ENCODE measurements at regions of chr5 and their contacts with region 1.

Region 1: GRCh38 chr5:10856683-10857337 is 95.8 kb upstream of the DAP start:
- DNase-seq: peak; percentile 70 to 92
- H3K4me3 ChIP-seq: peak overlapping the region in 3 of 4 experiments; percentile 2 to 48 (median 20); a peak in 4 of 8 replicates
- H3K27ac ChIP-seq: no peak overlapping the region
- H3K4me1 ChIP-seq: peaks cover 4 to 16% (median 14%) of the 10 kb centered on the region in 4 experiments
- H3K27me3 ChIP-seq: peaks cover 0 to 10% (median 6%) of the 10 kb centered on the region in 4 experiments; a peak in 3 of 7 replicates
- CTCF ChIP-seq: peak; percentile 76 to 91 (median 86)
- EP300 ChIP-seq: 0 out of 3 replicates have a peak, but pooled peaks of 1 of the 2 experiments have one; percentile 55
- POLR2A ChIP-seq: no peak
- RAD21 ChIP-seq: peak; percentile 50 to 60; a peak in 3 of 4 replicates

Region 2: DNA sequence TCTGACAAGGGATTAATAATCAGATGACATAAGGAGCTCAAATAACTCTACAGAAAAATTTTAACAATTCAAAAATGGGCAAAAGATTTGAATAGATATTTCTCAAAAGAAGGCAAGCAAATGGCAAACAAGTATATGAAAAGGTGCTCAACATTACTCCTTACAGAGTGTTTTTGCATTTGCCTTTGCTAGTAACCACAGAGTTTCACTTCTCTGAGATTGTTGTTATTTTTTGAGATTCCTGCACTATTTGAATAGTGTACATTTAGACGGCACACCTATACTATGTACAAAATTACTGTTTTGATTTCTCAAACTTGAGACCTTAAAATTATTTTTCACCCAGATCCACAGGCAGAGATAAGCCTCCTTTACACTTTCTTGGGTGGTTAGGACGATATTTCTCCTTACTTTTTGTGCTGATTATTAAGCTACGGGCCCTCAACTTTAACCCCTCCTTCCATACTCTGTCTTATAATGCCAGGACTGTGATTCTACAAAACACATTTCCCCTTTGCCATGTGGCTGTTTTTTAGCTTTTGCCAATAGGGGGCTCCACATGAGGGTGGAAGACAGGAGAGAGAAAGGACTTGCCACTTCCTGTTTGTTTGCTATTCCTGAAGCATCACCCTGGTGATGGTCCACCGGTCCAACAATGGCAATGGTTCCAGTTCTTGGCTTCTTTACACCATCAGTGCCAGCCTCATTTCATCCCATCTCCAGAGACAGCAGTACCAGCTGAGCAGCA is 30.7 kb before region 1 on chr5:
- CTCF ChIA-PET with region 1: interaction called, 36 read pairs
- POLR2A ChIA-PET with region 1: no interaction called
- DNase-seq: peak in 1 of 2 experiments; percentile 54
- H3K4me3 ChIP-seq: no peak overlapping the region
- H3K27ac ChIP-seq: no peak overlapping the region
- H3K4me1 ChIP-seq: no peaks in the 10 kb centered on the region
- H3K27me3 ChIP-seq: no peaks in the 10 kb centered on the region
- CTCF ChIP-seq: peak in 2 of 3 experiments; percentile 60 to 65; a peak in 3 of 4 replicates
- EP300 ChIP-seq: no peak
- POLR2A ChIP-seq: no peak
- RAD21 ChIP-seq: peak; percentile 38 to 54

Region 3: DNA sequence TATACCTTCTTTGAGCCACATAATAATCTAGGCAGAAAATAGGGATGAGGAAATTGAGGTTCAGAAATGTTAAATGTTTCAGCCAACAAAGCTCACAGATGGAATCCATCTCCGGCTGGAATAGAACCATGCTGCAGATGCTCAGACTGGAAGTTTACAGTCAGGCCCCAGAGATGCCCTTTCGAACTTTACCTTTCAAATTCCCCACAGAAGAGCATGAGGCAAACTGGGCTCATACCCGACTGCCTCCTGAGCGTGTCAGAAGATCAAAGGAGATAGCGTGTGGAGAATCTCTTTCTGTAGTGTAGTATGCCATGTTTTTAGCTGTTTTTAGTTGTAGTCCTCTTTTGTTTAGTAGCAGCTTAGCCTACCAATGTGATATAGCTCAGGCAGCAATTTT is 23.8 kb before region 1 on chr5:
- CTCF ChIA-PET with region 1: interaction called, 38 read pairs
- POLR2A ChIA-PET with region 1: no interaction called
- DNase-seq: no peak
- H3K4me3 ChIP-seq: no peak overlapping the region
- H3K27ac ChIP-seq: no peak overlapping the region
- H3K4me1 ChIP-seq: no peaks in the 10 kb centered on the region
- H3K27me3 ChIP-seq: no peaks in the 10 kb centered on the region
- CTCF ChIP-seq: no peak
- EP300 ChIP-seq: no peak
- POLR2A ChIP-seq: no peak
- RAD21 ChIP-seq: no peak

Region 4: GRCh38 chr5:10838038-10838437 is 18.8 kb before region 1 on chr5:
- CTCF ChIA-PET with region 1: interaction called, 38 read pairs
- POLR2A ChIA-PET with region 1: no interaction called
- DNase-seq: no peak
- H3K4me3 ChIP-seq: no peak overlapping the region
- H3K27ac ChIP-seq: no peak overlapping the region
- H3K4me1 ChIP-seq: no peaks in the 10 kb centered on the region; a peak in 1 of 7 replicates
- H3K27me3 ChIP-seq: no peaks in the 10 kb centered on the region
- CTCF ChIP-seq: no peak
- EP300 ChIP-seq: no peak
- POLR2A ChIP-seq: no peak
- RAD21 ChIP-seq: no peak

Region 5: GRCh38 chr5:10868956-10869355 is 12.1 kb after region 1 on chr5:
- CTCF ChIA-PET with region 1: interaction called, 38 read pairs
- POLR2A ChIA-PET with region 1: interaction called, 5 read pairs
- DNase-seq: no peak
- H3K4me3 ChIP-seq: no peak overlapping the region
- H3K27ac ChIP-seq: no peak overlapping the region
- H3K4me1 ChIP-seq: no peaks in the 10 kb centered on the region
- H3K27me3 ChIP-seq: no peaks in the 10 kb centered on the region
- CTCF ChIP-seq: no peak
- EP300 ChIP-seq: no peak
- POLR2A ChIP-seq: no peak
- RAD21 ChIP-seq: no peak

Region 6: DNA sequence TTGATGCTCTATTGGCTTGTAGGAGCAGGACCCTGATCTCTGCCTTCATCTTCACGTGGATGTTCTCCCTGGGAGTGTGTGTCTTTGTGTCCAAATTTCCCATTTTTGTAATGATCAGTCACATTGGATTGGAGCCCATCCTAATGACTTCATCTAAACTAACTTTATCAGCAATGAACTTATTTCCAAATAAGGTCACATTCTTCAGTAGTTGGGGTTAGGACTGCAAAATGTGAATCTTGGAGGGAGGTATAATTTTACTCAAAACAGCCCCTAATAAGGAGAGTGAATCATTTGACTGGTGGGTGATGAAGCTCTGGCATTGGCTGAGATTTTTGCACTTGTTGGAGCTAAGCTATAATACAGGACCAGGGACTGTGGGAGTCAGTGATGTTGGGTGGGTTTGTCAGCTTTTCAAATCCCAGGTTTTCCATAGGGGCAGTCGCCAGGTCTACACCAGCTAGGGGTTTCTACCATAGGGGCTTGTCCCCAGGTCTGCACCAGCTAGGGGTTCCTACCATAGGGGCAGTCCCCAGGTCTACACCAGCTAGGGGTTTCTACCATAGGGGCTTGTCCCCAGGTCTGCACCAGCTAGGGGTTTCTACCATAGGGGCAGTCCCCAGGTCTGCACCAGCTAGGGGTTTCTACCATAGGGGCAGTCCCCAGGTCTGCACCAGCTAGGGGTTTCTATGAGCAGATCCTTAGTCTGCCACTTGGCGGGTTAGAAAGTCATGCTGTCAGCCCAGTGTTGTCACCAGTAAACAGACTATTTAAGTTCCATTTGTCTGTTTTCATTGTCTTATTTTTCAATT is 286.9 kb after region 1 on chr5:
- CTCF ChIA-PET with region 1: no interaction called
- POLR2A ChIA-PET with region 1: no interaction called
- DNase-seq: no peak
- H3K4me3 ChIP-seq: no peak overlapping the region
- H3K27ac ChIP-seq: no peak overlapping the region
- H3K4me1 ChIP-seq: no peaks in the 10 kb centered on the region; a peak in 1 of 7 replicates
- H3K27me3 ChIP-seq: no peaks in the 10 kb centered on the region
- CTCF ChIP-seq: no peak
- EP300 ChIP-seq: no peak
- POLR2A ChIP-seq: no peak
- RAD21 ChIP-seq: no peak

Region 7: GRCh38 chr5:11212706-11213105 is 355.9 kb after region 1 on chr5:
- CTCF ChIA-PET with region 1: no interaction called
- POLR2A ChIA-PET with region 1: no interaction called
- DNase-seq: no peak
- H3K4me3 ChIP-seq: no peak overlapping the region
- H3K27ac ChIP-seq: no peak overlapping the region
- H3K4me1 ChIP-seq: peaks cover 0 to 5% (median 0%) of the 10 kb centered on the region in 4 experiments; a peak in 1 of 7 replicates
- H3K27me3 ChIP-seq: no peaks in the 10 kb centered on the region
- CTCF ChIP-seq: no peak
- EP300 ChIP-seq: no peak
- POLR2A ChIP-seq: no peak
- RAD21 ChIP-seq: no peak